Esophagus squamous epithelium (tissue), 5 donors: ENCODE measurements at regions of chr22 and their contacts with region 1.

Region 1: DNA sequence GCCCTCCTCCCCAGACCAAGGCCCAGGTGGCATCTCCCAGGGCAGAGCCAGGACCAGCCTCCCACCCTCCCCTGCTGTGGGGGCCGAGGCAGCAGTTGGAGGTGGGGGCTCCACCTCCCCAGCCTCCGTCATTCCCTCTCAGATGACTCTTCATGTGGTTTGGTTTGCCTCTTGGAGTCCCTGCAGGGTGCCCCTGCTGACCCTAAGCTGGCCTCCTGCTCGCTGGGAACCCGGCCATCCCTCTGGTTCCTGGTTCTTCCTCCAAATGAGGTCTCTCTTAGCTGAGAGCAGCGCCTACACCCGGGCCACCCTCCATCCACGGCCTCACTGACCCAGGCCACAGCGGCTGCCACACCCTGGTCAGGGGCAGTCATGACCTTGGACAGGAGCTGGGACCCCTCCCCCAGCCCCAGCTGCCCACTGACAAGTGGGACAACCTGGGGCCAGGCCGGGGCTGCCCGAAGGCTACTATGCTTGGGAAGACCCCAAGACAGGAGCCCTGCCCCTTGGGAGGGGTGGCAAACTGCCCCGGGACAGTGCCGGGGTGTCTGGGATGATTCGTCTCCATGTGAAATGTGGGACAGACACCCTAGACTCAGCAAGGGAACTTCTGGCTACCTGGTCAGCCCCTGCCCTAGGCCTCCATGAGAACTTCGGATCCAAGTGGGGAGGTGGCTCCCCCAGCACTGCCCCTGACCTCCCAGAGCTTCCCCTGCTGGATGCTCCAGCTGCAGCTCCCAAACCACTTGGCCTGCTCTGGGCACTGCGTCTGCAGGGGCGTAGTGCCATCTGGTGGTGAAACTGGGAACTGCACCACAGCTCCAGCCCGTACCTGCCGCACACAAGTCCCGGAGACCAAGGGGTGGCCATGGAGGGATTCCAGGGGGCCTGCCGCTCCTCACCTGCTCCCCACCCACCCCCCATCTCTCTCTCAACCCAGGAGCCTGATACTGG is 194.5 kb downstream of the IGLL1 start:
- DNase-seq: no peak
- H3K4me3 ChIP-seq: no peak overlapping the region
- H3K27ac ChIP-seq: no peak overlapping the region
- H3K4me1 ChIP-seq: peaks cover 0 to 17% (median 0%) of the 10 kb centered on the region in 3 donors
- H3K27me3 ChIP-seq: peaks cover 0 to 40% (median 0%) of the 10 kb centered on the region in 4 donors
- CTCF ChIP-seq: peak; percentile 96 to 100 (median 98)
- POLR2A ChIP-seq: no peak

Region 2: GRCh38 chr22:23305922-23306374 is 79.6 kb before region 1 on chr22:
- intact Hi-C with region 1: loop called (anchors 10 kb)
- DNase-seq: no peak
- H3K4me3 ChIP-seq: peak overlapping the region in 1 of 4 donors; percentile 50
- H3K27ac ChIP-seq: peak overlapping the region; percentile 72 to 92 (median 90)
- H3K4me1 ChIP-seq: peaks cover 0 to 38% (median 19%) of the 10 kb centered on the region in 3 donors
- H3K27me3 ChIP-seq: no peaks in the 10 kb centered on the region
- CTCF ChIP-seq: no peak
- POLR2A ChIP-seq: no peak